ENCODE measurements at regions of chr4 and their contacts with region 1.

Region 1: DNA sequence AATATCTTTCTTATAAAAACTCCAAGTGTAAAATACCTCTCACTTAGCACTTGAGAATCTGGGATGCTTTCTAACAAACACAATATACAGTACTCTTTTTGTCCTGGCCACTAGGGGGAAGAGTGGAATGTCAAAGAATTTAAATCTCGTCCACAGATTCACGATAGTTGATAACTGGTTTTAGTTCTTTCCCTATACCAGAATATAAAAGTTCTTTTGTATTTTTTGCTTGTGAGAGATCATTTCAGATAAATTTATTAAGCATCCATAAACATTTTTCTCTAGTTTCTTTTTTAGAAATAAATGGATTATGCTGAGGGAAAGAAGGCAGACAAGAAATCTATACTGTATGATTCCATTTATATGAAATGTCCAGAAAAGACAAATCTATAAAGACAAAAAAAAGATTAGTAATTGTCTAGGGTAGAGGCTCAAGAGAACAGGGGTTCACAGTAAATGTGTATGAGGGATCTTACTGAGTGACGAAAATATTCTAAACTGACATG is 50.4 kb downstream of the MGARP start:
- DNase-seq: no peak
- H3K4me3 ChIP-seq: no peak overlapping the region
- H3K27me3 ChIP-seq: no peaks in the 10 kb centered on the region
- CTCF ChIP-seq: peak; percentile 65

Region 2: DNA sequence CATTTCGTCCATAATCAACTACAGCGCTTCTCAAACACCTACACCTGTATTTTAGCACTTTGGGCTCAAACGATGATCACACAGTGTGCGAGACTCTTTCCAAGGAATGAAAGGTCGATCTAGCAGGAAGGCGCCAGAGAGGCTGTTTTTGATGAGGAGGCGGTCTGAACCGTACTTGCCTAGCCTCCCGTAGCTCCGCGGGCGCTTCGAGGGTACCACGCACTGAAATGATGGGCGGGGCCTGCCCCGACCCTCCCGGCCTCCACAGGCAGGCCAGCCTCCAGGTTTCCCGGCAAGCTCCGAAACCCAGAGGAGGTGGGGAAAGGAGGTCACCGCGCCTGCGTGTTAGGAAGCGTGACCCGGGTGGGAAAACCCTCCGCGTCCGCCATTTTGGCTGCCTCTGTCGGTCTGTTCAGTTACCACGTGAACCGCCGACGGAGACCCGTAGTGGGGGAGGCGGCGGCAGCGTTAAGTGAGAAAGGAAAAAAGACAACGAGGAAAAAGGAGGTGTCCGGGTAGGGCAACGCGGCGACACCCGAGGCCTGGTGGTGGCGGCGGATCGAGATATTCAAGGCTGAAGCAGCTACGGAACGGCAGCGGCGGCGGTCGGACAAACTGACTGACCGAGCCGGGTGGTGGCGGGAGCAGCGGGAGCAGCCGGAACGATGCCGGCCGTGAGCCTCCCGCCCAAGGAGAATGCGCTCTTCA is 71.7 kb after region 1 on chr4 and contains the start of gene NAA15:
- CTCF ChIA-PET with region 1: interaction called, 20 read pairs
- POLR2A ChIA-PET with region 1: no interaction called
- DNase-seq: peak; percentile 82
- H3K4me3 ChIP-seq: peak within 1 kb of the TSS; percentile 87
- H3K27me3 ChIP-seq: no peaks in the 10 kb centered on the region
- CTCF ChIP-seq: no peak
- polyA plus RNA-seq, gene NAA15: 5.3 and 15.0 TPM in 2 replicates

Region 3: GRCh38 chr4:139720540-139721205 is 491.1 kb after region 1 on chr4:
- CTCF ChIA-PET with region 1: no interaction called
- POLR2A ChIA-PET with region 1: no interaction called
- DNase-seq: no peak
- H3K4me3 ChIP-seq: no peak overlapping the region
- H3K27me3 ChIP-seq: no peaks in the 10 kb centered on the region
- CTCF ChIP-seq: no peak